Endothelial cell of umbilical vein (primary cell): ENCODE measurements at regions of chr19 and their contacts with region 1.

Region 1: DNA sequence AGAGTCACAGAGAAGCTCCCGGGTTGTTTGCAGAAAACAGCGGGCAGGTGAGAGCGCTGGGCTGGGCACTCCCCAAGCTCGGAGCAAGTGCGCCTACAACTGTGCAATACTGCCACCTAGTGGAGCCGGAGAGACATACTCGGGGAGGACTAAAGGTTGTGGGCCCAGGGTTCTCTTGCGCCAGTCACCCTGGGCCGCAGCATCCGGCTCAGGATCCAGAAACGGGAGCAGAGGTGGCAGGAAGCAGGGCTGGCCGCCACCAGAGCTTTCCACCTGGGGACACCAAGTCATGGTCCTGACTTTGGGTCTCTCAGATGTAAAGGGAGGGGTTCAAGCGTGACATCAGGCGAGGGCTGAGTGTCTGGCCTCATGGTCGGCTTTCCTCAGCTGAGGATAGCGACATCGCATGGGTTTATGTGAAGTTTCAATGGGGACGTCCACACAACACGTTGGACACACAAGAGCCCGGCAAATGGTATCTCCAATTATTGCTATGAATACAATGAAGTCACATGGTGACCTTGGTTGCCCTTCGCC is 11.2 kb upstream of the KLK4 start:
- DNase-seq: peak; percentile 65
- H3K4me3 ChIP-seq: no peak overlapping the region
- H3K27ac ChIP-seq: no peak overlapping the region
- H3K4me1 ChIP-seq: no peaks in the 10 kb centered on the region
- H3K27me3 ChIP-seq: peaks cover 0 to 3% of the 10 kb centered on the region in 2 experiments
- CTCF ChIP-seq: peak; percentile 83 to 84
- POLR2A ChIP-seq: no peak

Region 2: DNA sequence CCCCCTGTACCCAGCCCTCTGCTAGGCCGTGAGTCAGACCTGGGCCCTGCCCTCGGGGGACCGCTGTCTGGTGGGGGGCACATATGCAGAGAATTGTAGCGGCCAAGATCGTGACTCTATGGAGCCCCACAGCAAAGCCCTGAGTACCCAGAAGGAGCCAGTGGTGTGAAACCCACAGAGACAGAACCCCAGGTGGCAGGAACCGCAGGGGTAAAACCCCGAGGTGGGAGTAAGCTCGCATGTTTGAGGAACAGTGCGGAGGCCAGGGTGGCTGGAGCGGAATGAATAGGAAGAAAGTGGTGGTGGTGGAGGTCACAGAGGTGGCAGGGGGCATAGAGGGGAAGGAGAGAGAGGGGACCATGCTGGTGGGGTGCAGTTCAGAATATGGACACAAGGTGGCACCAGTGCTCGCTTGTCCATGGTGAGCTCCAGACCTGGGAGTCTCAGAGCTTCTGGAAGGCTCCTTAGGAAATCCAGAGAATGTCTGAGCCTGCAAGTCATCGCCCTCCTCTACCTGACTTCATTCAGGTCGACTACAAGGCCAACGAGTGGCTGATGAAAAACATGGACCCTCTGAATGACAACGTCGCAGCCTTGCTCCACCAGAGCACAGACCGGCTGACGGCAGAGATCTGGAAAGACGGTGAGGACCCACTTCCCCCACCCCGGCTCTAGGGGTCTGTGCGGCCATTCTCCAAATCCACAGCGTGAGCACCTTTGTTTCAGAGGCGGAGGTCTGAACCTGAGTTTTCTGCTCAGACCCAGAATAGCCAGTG is 670.1 kb before region 1 on chr19:
- CTCF ChIA-PET with region 1: interaction called, 13 read pairs
- POLR2A ChIA-PET with region 1: no interaction called
- dilution Hi-C with region 1: no loop called
- intact Hi-C with region 1: no loop called
- DNase-seq: peak; percentile 25
- H3K4me3 ChIP-seq: no peak overlapping the region
- H3K27ac ChIP-seq: no peak overlapping the region
- H3K4me1 ChIP-seq: no peaks in the 10 kb centered on the region
- H3K27me3 ChIP-seq: no peaks in the 10 kb centered on the region
- CTCF ChIP-seq: peak; percentile 60 to 82
- POLR2A ChIP-seq: no peak

Region 3: GRCh38 chr19:50368649-50369570 is 553.5 kb before region 1 on chr19:
- CTCF ChIA-PET with region 1: interaction called, 10 read pairs
- POLR2A ChIA-PET with region 1: no interaction called
- dilution Hi-C with region 1: no loop called
- intact Hi-C with region 1: loop called (anchors 1 kb)
- DNase-seq: peak; percentile 80
- H3K4me3 ChIP-seq: peak overlapping the region; percentile 20 to 53 (median 42)
- H3K27ac ChIP-seq: peak overlapping the region; percentile 19
- H3K4me1 ChIP-seq: peaks cover 5% of the 10 kb centered on the region
- H3K27me3 ChIP-seq: no peaks in the 10 kb centered on the region
- CTCF ChIP-seq: peak; percentile 71 to 84
- POLR2A ChIP-seq: no peak

Region 4: GRCh38 chr19:50601407-50602088 is 320.8 kb before region 1 on chr19:
- CTCF ChIA-PET with region 1: no interaction called
- POLR2A ChIA-PET with region 1: no interaction called
- dilution Hi-C with region 1: no loop called
- intact Hi-C with region 1: loop called (anchors 5 kb)
- DNase-seq: no peak
- H3K4me3 ChIP-seq: no peak overlapping the region
- H3K27ac ChIP-seq: peak overlapping the region; percentile 39
- H3K4me1 ChIP-seq: peaks cover 19% of the 10 kb centered on the region
- H3K27me3 ChIP-seq: no peaks in the 10 kb centered on the region
- CTCF ChIP-seq: no peak
- POLR2A ChIP-seq: no peak

Region 5: GRCh38 chr19:50669302-50670101 is 252.9 kb before region 1 on chr19:
- CTCF ChIA-PET with region 1: interaction called, 38 read pairs
- POLR2A ChIA-PET with region 1: no interaction called
- dilution Hi-C with region 1: no loop called
- intact Hi-C with region 1: no loop called
- DNase-seq: peak; percentile 31
- H3K4me3 ChIP-seq: no peak overlapping the region
- H3K27ac ChIP-seq: no peak overlapping the region
- H3K4me1 ChIP-seq: no peaks in the 10 kb centered on the region
- H3K27me3 ChIP-seq: peaks cover 21 to 31% of the 10 kb centered on the region in 2 experiments
- CTCF ChIP-seq: peak; percentile 75 to 76
- POLR2A ChIP-seq: no peak

Region 6: GRCh38 chr19:50909240-50910070 is 12.9 kb before region 1 on chr19:
- CTCF ChIA-PET with region 1: interaction called, 24 read pairs
- POLR2A ChIA-PET with region 1: no interaction called
- dilution Hi-C with region 1: no loop called
- intact Hi-C with region 1: loop called (anchors 1 kb)
- DNase-seq: peak; percentile 47
- H3K4me3 ChIP-seq: no peak overlapping the region
- H3K27ac ChIP-seq: no peak overlapping the region
- H3K4me1 ChIP-seq: no peaks in the 10 kb centered on the region
- H3K27me3 ChIP-seq: peaks cover 18 to 24% of the 10 kb centered on the region in 2 experiments
- CTCF ChIP-seq: no peak
- POLR2A ChIP-seq: no peak

Region 7: GRCh38 chr19:50947123-50947522 is 24.7 kb after region 1 on chr19:
- CTCF ChIA-PET with region 1: interaction called, 12 read pairs
- POLR2A ChIA-PET with region 1: no interaction called
- dilution Hi-C with region 1: no loop called
- intact Hi-C with region 1: no loop called
- DNase-seq: no peak
- H3K4me3 ChIP-seq: no peak overlapping the region
- H3K27ac ChIP-seq: no peak overlapping the region
- H3K4me1 ChIP-seq: no peaks in the 10 kb centered on the region
- H3K27me3 ChIP-seq: no peaks in the 10 kb centered on the region
- CTCF ChIP-seq: no peak
- POLR2A ChIP-seq: no peak

Region 8: DNA sequence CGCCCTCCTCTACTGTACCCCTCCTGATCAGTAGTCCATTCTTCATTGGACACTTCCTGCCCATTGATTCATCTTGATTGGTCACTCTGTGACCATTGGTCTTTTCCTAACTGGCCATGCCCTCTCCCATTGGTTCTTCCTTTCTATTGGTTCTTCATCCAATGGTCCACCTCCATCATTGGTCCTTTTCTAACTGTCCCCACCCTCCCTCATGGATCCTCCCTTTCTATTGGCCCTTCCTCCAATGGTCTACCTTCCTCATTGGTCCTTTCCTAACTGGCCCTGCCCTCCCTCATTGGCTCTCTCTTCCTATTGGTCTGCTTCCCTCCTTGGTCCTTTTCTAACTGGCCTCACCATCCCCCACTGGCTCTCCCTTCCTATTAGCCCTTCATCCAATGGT is 39.9 kb after region 1 on chr19:
- CTCF ChIA-PET with region 1: no interaction called
- POLR2A ChIA-PET with region 1: no interaction called
- dilution Hi-C with region 1: no loop called
- intact Hi-C with region 1: no loop called
- DNase-seq: no peak
- H3K4me3 ChIP-seq: no peak overlapping the region
- H3K27ac ChIP-seq: no peak overlapping the region
- H3K4me1 ChIP-seq: no peaks in the 10 kb centered on the region
- H3K27me3 ChIP-seq: no peaks in the 10 kb centered on the region
- CTCF ChIP-seq: no peak
- POLR2A ChIP-seq: no peak

Region 9: GRCh38 chr19:51274037-51274370 is 351.6 kb after region 1 on chr19:
- CTCF ChIA-PET with region 1: no interaction called
- POLR2A ChIA-PET with region 1: no interaction called
- dilution Hi-C with region 1: no loop called
- intact Hi-C with region 1: no loop called
- DNase-seq: no peak
- H3K4me3 ChIP-seq: no peak overlapping the region
- H3K27ac ChIP-seq: no peak overlapping the region
- H3K4me1 ChIP-seq: no peaks in the 10 kb centered on the region
- H3K27me3 ChIP-seq: no peaks in the 10 kb centered on the region
- CTCF ChIP-seq: no peak
- POLR2A ChIP-seq: no peak